ENCODE measurements at regions of chr14 and their contacts with region 1.

Region 1: DNA sequence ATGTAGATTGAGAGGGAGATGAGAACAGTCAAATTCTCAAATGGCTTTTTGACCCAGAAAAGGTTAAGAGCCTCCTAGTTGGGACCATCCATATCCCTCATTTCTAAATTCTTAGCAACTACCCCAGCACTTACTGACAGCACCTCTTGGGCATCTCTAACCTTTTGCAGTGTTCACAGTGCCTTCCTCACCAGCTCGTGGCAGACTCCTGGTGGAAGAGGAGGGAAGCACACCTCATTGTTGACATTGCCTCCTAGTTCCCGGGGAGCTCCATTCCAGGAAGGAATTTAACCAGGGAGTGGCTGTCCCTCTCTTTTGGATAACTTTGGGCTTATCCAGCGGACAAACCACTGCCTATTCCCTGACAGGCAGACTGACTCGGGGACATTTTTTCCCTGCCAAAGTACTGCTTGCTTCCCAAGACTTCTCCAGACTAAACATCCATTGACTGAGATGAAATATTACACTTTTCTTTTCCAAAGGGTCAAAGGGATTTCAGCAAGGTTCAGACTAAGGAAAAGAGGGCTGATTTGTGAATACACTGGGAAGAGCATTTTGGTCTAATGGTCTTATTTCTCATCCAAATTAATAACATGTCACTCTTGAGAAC is 9.0 kb upstream of the OR6J1 start:
- DNase-seq: peak; percentile 34 to 56 (median 38)
- H3K4me3 ChIP-seq: no peak overlapping the region
- H3K4me3 Mint-ChIP-seq: no peak overlapping the region
- H3K27ac ChIP-seq: no peak overlapping the region
- H3K27ac Mint-ChIP-seq: no peak overlapping the region
- H3K4me1 ChIP-seq: no peaks in the 10 kb centered on the region
- H3K4me1 Mint-ChIP-seq: no peaks in the 10 kb centered on the region
- H3K27me3 ChIP-seq: no peaks in the 10 kb centered on the region
- H3K27me3 Mint-ChIP-seq: peaks cover 3 to 8% (median 7%) of the 10 kb centered on the region in 3 donors
- CTCF ChIP-seq: peak; percentile 80

Region 2: GRCh38 chr14:22570132-22570949 is 82.8 kb before region 1 on chr14:
- intact Hi-C with region 1: loop called (anchors 2 to 5 kb)
- DNase-seq: peak; percentile 68 to 74 (median 73)
- H3K4me3 ChIP-seq: no peak overlapping the region
- H3K4me3 Mint-ChIP-seq: no peak overlapping the region
- H3K27ac ChIP-seq: no peak overlapping the region
- H3K27ac Mint-ChIP-seq: peak overlapping the region in 6 of 7 donors; percentile 31 to 72 (median 64)
- H3K4me1 ChIP-seq: no peaks in the 10 kb centered on the region
- H3K4me1 Mint-ChIP-seq: peaks cover 7% of the 10 kb centered on the region
- H3K27me3 ChIP-seq: no peaks in the 10 kb centered on the region
- H3K27me3 Mint-ChIP-seq: no peaks in the 10 kb centered on the region
- CTCF ChIP-seq: peak; percentile 70